ENCODE measurements at regions of chr3 and their contacts with region 1.

Region 1: DNA sequence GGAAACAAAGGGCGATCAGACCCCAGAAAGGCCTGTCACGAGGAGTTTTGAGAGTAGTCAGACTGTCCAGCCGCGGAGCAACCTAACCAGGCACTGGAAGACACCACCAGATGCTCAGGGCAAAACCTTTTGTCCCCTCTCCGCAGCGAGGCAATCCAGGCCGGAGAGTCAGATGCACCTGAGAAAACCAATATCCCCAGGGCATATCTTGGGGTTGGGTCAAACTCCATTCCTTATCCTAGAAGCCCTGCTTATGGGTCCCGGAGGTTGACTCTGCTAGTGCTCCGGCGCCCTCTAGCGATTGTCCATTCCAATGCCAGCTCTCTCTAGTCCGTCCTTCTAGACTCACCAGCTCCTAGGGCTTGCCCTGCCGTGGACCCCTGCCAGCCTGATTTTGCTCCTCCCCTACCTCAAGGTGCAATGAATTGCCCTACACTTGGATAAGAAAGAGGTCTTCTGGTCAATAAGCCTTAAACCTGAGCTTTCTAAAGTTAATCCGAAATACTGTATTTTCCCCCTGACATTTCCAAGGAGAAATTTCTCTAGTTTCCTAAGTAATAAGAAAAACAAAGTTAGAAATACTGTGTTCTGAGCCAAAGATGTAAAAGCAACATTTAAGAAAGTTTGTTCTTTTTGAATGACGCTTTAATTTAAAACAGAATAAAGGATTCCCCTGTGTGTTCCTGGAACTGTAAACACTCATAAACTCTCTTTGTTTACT is 5.5 kb downstream of the CPNE4 start:
- DNase-seq: peak; percentile 34
- H3K4me3 Mint-ChIP-seq: no peak overlapping the region
- H3K27ac Mint-ChIP-seq: no peak overlapping the region
- H3K4me1 Mint-ChIP-seq: peaks cover 3% of the 10 kb centered on the region
- H3K27me3 Mint-ChIP-seq: peaks cover 36% of the 10 kb centered on the region

Region 2: DNA sequence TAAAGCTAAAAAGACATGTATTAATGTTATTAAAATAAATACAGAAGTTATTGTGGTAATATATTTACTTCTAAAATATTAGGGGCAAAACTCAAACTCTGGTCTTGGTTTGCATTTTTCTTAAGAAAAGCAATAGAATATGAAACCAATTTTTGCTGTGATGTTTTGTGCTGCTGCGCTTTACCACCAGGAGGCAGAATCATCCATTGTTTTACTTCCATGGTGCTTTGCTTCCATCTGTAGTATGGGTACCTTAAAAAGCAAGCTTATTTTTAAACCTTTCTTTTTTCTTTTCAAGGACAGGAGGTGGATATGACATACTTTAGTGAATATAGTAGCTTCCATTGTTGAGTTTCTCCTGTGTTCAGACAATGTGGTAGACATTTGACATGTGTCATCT is 480.0 kb before region 1 on chr3:
- intact Hi-C with region 1: loop called (anchors 1 kb)
- DNase-seq: no peak
- H3K4me3 Mint-ChIP-seq: no peak overlapping the region
- H3K27ac Mint-ChIP-seq: no peak overlapping the region
- H3K4me1 Mint-ChIP-seq: peaks cover 13% of the 10 kb centered on the region
- H3K27me3 Mint-ChIP-seq: peaks cover 17% of the 10 kb centered on the region

Region 3: DNA sequence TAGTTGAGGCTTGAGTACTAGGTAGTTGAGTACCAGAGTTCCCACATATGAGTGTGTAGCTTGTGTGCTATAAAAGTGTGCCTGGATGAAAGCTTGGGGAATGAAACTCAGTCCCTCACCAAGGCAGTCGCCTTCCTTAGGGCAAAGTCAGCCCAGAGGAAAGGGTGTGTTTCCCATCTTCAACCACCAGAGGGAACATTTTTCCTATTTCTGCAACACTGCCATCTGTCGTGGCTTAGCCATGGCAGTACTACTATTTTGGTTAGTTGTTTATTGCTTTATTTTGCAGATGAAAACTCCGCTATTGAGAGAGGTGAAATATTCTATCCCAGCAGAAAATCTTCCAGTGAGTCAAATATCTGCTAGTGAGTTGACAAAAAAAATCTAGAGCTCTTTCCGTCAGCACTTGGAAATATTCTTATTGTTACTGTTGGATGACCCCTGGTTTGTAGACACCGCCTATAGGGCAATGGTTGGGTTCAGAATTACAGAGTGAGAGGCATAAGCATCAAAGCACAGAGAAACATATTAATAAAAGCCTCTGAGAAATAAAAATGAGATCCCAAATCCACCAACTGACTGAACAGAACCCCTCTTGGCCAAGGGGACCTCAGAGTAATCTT is 234.5 kb before region 1 on chr3:
- intact Hi-C with region 1: loop called (anchors 1 kb)
- DNase-seq: peak; percentile 8
- H3K4me3 Mint-ChIP-seq: no peak overlapping the region
- H3K27ac Mint-ChIP-seq: no peak overlapping the region
- H3K4me1 Mint-ChIP-seq: peaks cover 10% of the 10 kb centered on the region
- H3K27me3 Mint-ChIP-seq: no peaks in the 10 kb centered on the region

Region 4: GRCh38 chr3:132006605-132007204 is 22.6 kb before region 1 on chr3:
- intact Hi-C with region 1: loop called (anchors 1 kb)
- DNase-seq: no peak
- H3K4me3 Mint-ChIP-seq: no peak overlapping the region
- H3K27ac Mint-ChIP-seq: no peak overlapping the region
- H3K4me1 Mint-ChIP-seq: no peaks in the 10 kb centered on the region
- H3K27me3 Mint-ChIP-seq: peaks cover 2% of the 10 kb centered on the region

Region 5: GRCh38 chr3:132317229-132317948 is 288.0 kb after region 1 on chr3 and contains the start of gene ACP3:
- intact Hi-C with region 1: no loop called
- DNase-seq: no peak
- H3K4me3 Mint-ChIP-seq: no peak within 1 kb of the TSS
- H3K27ac Mint-ChIP-seq: no peak within 1 kb of the TSS
- H3K4me1 Mint-ChIP-seq: peaks cover 4% of the 10 kb centered on the region
- H3K27me3 Mint-ChIP-seq: peaks cover 12% of the 10 kb centered on the region
- total RNA-seq, gene ACP3: not detected in 2 replicates

Region 6: GRCh38 chr3:132380920-132381319 is 351.6 kb after region 1 on chr3:
- intact Hi-C with region 1: no loop called
- DNase-seq: no peak
- H3K4me3 Mint-ChIP-seq: no peak overlapping the region
- H3K27ac Mint-ChIP-seq: no peak overlapping the region
- H3K4me1 Mint-ChIP-seq: no peaks in the 10 kb centered on the region
- H3K27me3 Mint-ChIP-seq: peaks cover 3% of the 10 kb centered on the region

Measured in activated T-helper 1 cell treated with anti-CD3 and anti-CD28 coated beads, Interleukin-12 subunit alpha, Interleukin-12 subunit beta, Interleukin-2, Interleukin-4 antibody, amounts not matched to agents 30 ng/mL and 10 ng/mL and 1 ng/mL, durations not matched to agents 14 hours and 24 hours and 36 hours (primary cell).